Heart right ventricle (tissue), 16 donors: ENCODE measurements at regions of chr4 and their contacts with region 1.

Region 1: GRCh38 chr4:15882675-15883086 is 55.9 kb downstream of the FGFBP1 start:
- DNase-seq: peak in 1 of 2 donors; percentile 47
- ATAC-seq: peak; percentile 61 to 91 (median 82)
- H3K4me3 ChIP-seq: no peak overlapping the region
- H3K27ac ChIP-seq: no peak overlapping the region
- H3K4me1 ChIP-seq: no peaks in the 10 kb centered on the region
- H3K27me3 ChIP-seq: peaks cover 0 to 4% (median 0%) of the 10 kb centered on the region in 7 donors
- CTCF ChIP-seq: peak; percentile 79 to 95 (median 90)

Region 2: DNA sequence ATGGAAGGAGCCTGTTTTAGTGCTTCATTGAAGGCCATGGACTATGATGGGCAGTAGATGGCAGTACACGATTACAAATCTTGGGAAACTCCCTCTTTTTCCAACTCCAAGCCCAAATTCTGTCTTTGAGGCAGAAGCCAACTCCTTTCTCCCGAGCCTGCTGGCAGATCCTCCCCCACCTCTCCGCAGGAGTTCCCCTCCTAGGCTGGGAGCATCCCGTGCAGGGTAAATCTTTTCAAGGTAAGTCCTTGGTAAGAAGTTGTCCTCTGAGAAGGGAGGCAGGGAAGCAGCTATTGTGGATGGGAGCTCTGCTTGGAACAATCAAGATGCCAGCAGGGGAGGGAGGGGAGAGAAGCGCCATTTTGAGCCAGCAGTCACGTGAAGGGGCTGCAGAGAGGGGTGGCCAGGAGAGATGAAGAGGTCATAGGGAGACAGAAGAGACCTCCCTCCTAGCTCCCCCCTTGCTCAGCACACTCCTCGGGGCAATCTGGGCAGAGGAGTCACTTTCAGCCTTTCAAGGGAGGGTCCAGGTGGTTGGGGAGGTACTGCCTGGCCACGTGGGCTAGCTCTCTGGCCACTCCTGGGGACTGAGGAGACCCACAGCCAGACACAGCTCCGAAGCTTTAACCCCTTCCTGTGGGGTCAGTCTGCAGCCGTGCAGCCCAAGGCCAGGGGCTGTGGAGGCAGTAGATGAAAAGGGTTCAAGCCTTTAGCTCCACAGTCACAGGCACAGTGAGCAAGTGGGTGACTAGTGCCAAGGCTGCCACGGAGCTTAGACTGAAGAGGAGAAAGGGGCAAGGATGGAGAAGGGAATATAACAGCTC is 403.4 kb before region 1 on chr4:
- intact Hi-C with region 1: loop called in 2 of 10 experiments (anchors 5 to 10 kb)
- DNase-seq: peak in 1 of 2 donors; percentile 43
- ATAC-seq: peak; percentile 72 to 90 (median 82)
- H3K4me3 ChIP-seq: peak overlapping the region in 9 of 10 donors; percentile 20 to 51 (median 42)
- H3K27ac ChIP-seq: peak overlapping the region in 9 of 10 donors; percentile 57 to 78 (median 68)
- H3K4me1 ChIP-seq: peaks cover 0 to 28% (median 0%) of the 10 kb centered on the region in 9 donors
- H3K27me3 ChIP-seq: no peaks in the 10 kb centered on the region
- CTCF ChIP-seq: peak; percentile 24 to 78 (median 66)

Region 3: DNA sequence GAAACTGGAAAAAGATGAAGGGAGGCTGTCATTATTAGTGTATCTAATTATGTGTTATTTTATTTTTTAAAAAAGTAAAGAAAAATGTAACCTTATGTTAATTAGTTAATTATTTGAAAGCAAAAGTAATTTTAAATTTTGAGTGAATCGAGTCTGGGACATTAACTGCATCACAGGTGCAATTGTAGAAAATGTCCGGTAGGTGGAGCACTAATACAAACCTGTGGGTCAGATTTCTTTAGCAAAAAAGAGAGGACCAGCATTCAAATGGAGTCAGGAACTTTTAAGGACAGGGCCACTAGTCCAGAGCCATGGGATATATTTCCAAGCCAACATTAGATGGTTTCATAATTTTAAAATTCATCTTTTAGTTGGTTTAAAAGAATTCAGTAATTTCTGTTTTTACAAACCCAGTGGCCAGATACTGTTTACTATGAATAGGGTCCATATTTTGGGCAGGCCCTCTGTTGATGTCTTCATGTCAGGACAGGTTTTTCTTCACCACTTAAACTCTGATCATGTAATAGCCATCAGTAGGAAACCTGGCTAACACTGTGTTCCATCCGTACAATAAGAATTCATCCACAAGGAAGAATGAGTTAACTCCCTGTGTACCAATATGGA is 152.7 kb before region 1 on chr4:
- intact Hi-C with region 1: loop called in 3 of 10 experiments (anchors 5 to 10 kb)
- DNase-seq: peak in 1 of 2 donors; percentile 15
- ATAC-seq: peak in 5 of 8 donors; percentile 33 to 72 (median 62)
- H3K4me3 ChIP-seq: no peak overlapping the region
- H3K27ac ChIP-seq: no peak overlapping the region
- H3K4me1 ChIP-seq: peaks cover 0 to 3% (median 0%) of the 10 kb centered on the region in 9 donors
- H3K27me3 ChIP-seq: no peaks in the 10 kb centered on the region
- CTCF ChIP-seq: peak; percentile 79 to 93 (median 90)

Region 4: DNA sequence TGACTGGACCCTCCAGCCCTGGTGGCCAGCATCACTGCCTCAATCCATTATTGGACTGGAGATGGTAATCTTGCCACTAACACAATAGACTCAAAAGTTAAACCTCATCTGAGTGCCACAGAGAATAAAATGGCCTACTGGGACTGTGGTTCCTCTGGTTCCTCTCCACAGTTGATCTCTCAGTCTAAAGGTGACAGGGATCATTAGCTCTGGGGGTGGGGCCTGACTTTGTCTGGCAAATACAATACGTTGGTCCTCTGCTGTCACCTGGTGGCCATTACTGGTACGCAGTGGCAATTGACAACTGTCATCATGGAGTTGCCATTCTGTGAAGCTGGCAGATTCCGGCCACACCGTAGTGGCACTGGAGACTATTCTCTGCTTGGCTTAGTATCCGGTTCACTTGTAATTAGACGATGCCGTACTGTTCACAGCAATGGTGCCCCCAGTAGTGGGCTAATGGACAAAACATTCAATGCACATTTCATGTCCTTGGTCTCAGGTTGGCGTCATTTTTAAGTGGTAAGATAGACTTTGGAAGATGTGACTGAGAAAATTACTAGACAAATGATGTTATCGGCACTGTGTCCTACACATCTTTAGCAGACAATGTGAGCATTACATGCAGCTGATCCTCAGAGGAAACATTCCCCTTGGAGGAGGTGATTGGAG is 73.6 kb after region 1 on chr4:
- intact Hi-C with region 1: loop called in 9 of 10 experiments (anchors 2 to 5 kb)
- DNase-seq: peak; percentile 66 to 78
- ATAC-seq: peak; percentile 63 to 93 (median 78)
- H3K4me3 ChIP-seq: no peak overlapping the region
- H3K27ac ChIP-seq: no peak overlapping the region
- H3K4me1 ChIP-seq: peaks cover 0 to 5% (median 0%) of the 10 kb centered on the region in 9 donors
- H3K27me3 ChIP-seq: no peaks in the 10 kb centered on the region
- CTCF ChIP-seq: peak; percentile 75 to 94 (median 87)

Region 5: DNA sequence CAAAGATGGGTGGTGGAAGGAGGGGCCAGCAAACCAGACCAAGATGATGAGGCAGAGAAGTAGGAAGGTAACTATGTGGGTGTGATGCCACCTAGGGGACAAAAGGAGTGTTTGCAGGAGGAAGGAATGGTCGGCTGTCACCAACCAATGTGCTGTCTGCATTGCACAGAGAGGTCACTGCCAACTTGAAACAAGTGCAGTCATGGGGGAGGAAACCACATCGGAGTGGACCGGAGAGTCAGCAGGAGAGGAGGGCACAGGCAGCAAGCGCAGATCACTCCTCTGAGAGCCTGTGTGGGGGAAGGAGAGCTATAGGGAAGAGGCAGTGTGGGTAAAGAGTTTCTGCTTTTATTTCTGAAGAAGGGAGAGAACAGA is 118.8 kb after region 1 on chr4:
- intact Hi-C with region 1: loop called in 9 of 10 experiments (anchors 1 to 5 kb)
- DNase-seq: peak in 1 of 2 donors; percentile 55
- ATAC-seq: peak; percentile 84 to 95 (median 94)
- H3K4me3 ChIP-seq: no peak overlapping the region
- H3K27ac ChIP-seq: no peak overlapping the region
- H3K4me1 ChIP-seq: peaks cover 0 to 13% (median 4%) of the 10 kb centered on the region in 9 donors
- H3K27me3 ChIP-seq: no peaks in the 10 kb centered on the region
- CTCF ChIP-seq: peak; percentile 72 to 88 (median 85)

Region 6: GRCh38 chr4:16264798-16265197 is 382.1 kb after region 1 on chr4:
- intact Hi-C with region 1: loop called in 6 of 10 experiments (anchors 2 to 10 kb)
- DNase-seq: no peak
- ATAC-seq: peak in 7 of 8 donors; percentile 59 to 82 (median 76)
- H3K4me3 ChIP-seq: no peak overlapping the region
- H3K27ac ChIP-seq: no peak overlapping the region
- H3K4me1 ChIP-seq: peaks cover 0 to 16% (median 0%) of the 10 kb centered on the region in 9 donors
- H3K27me3 ChIP-seq: no peaks in the 10 kb centered on the region
- CTCF ChIP-seq: peak; percentile 31 to 81 (median 70)

Region 7: GRCh38 chr4:16752150-16752549 is 869.5 kb after region 1 on chr4:
- intact Hi-C with region 1: no loop called
- DNase-seq: no peak
- ATAC-seq: no peak
- H3K4me3 ChIP-seq: no peak overlapping the region
- H3K27ac ChIP-seq: no peak overlapping the region
- H3K4me1 ChIP-seq: peaks cover 0 to 15% (median 0%) of the 10 kb centered on the region in 9 donors
- H3K27me3 ChIP-seq: no peaks in the 10 kb centered on the region
- CTCF ChIP-seq: peak in 7 of 9 donors; percentile 11 to 46 (median 28)